ENCODE measurements at regions of chr20 and their contacts with region 1.

Region 1: DNA sequence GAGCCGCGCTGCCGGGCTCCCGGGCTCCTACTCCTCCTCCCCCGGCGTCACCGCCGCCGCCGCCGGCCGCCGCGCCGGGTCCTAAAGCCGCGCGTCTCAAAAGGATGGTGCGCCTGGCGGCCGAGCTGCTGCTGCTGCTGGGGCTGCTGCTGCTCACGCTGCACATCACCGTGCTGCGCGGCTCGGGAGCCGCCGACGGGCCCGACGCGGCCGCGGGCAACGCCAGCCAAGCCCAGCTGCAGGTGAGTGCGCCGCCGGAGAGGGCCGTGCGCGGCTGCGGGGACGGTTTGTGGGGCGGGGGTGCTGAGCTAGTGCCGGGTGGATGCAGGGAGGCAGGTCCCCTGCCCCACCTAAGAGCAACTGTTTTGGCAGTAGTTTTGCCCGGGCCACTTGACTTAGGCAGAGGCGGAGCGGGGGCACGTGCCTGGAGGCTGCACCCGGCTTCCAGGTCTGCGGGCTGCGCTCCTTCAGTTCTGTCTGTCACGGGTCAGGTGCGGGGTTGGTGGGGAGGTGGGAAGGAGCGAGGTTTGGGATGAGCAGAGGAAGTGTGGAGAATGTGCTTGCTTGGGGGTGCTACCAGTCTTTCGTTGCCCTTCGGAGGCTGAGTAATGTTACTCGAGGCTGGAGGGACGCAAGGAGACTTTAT is 722 bp downstream of the ISM1 start:
- DNase-seq: peak; percentile 76
- H3K4me3 ChIP-seq: peak overlapping the region; percentile 47 to 64 (median 61)
- H3K27ac ChIP-seq: no peak overlapping the region
- H3K4me1 ChIP-seq: peaks cover 19% of the 10 kb centered on the region
- H3K27me3 ChIP-seq: no peaks in the 10 kb centered on the region
- CTCF ChIP-seq: no peak

Region 2: GRCh38 chr20:13186043-13186774 is 35.6 kb before region 1 on chr20:
- CTCF ChIA-PET with region 1: no interaction called
- dilution Hi-C with region 1: no loop called
- in situ Hi-C with region 1: no loop called
- intact Hi-C with region 1: no loop called
- DNase-seq: no peak
- H3K4me3 ChIP-seq: no peak overlapping the region
- H3K27ac ChIP-seq: no peak overlapping the region
- H3K4me1 ChIP-seq: no peaks in the 10 kb centered on the region
- H3K27me3 ChIP-seq: no peaks in the 10 kb centered on the region
- CTCF ChIP-seq: no peak

Region 3: GRCh38 chr20:13243826-13244376 is 22.1 kb after region 1 on chr20:
- CTCF ChIA-PET with region 1: no interaction called
- dilution Hi-C with region 1: no loop called
- in situ Hi-C with region 1: no loop called
- intact Hi-C with region 1: loop called (anchors 2 kb)
- DNase-seq: peak; percentile 66
- H3K4me3 ChIP-seq: no peak overlapping the region
- H3K27ac ChIP-seq: no peak overlapping the region
- H3K4me1 ChIP-seq: peaks cover 37% of the 10 kb centered on the region
- H3K27me3 ChIP-seq: no peaks in the 10 kb centered on the region
- CTCF ChIP-seq: no peak

Region 4: GRCh38 chr20:13261460-13262301 is 39.9 kb after region 1 on chr20:
- CTCF ChIA-PET with region 1: no interaction called
- dilution Hi-C with region 1: no loop called
- in situ Hi-C with region 1: no loop called
- intact Hi-C with region 1: loop called (anchors 1 kb)
- DNase-seq: peak; percentile 36
- H3K4me3 ChIP-seq: no peak overlapping the region
- H3K27ac ChIP-seq: no peak overlapping the region
- H3K4me1 ChIP-seq: no peaks in the 10 kb centered on the region
- H3K27me3 ChIP-seq: no peaks in the 10 kb centered on the region
- CTCF ChIP-seq: peak; percentile 90 to 94

Region 5: GRCh38 chr20:13302647-13303450 is 81.1 kb after region 1 on chr20:
- CTCF ChIA-PET with region 1: no interaction called
- dilution Hi-C with region 1: no loop called
- in situ Hi-C with region 1: no loop called
- intact Hi-C with region 1: loop called (anchors 5 kb)
- DNase-seq: peak; percentile 30
- H3K4me3 ChIP-seq: no peak overlapping the region
- H3K27ac ChIP-seq: no peak overlapping the region
- H3K4me1 ChIP-seq: peaks cover 14% of the 10 kb centered on the region
- H3K27me3 ChIP-seq: no peaks in the 10 kb centered on the region
- CTCF ChIP-seq: peak; percentile 84

Measured in mammary epithelial cell (primary cell).